ENCODE measurements at regions of chr3 and their contacts with region 1.

Region 1: DNA sequence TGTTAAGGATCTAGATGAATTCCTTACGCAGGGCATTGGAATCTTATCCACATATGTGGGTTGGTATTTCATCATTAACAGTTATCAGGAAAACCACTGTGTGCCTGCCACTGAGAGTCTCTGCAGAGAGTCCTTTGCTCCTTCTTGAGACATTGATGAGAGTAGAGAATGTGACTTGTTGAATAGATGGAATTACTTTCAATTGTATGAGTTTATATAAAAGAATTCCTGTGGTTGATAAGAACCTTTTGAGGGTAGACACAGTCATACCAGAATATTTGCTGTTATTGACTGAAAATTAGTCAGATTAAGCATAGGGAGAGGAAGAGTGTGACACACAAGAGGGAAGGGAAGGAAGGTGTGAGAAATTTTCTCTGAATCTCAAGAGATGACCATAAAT is 30.8 kb downstream of the ARHGEF26 start:
- DNase-seq: peak; percentile 51
- H3K4me3 ChIP-seq: no peak overlapping the region
- H3K27ac ChIP-seq: no peak overlapping the region
- H3K4me1 ChIP-seq: peaks cover 10% of the 10 kb centered on the region
- H3K27me3 ChIP-seq: no peaks in the 10 kb centered on the region
- CTCF ChIP-seq: no peak

Region 2: DNA sequence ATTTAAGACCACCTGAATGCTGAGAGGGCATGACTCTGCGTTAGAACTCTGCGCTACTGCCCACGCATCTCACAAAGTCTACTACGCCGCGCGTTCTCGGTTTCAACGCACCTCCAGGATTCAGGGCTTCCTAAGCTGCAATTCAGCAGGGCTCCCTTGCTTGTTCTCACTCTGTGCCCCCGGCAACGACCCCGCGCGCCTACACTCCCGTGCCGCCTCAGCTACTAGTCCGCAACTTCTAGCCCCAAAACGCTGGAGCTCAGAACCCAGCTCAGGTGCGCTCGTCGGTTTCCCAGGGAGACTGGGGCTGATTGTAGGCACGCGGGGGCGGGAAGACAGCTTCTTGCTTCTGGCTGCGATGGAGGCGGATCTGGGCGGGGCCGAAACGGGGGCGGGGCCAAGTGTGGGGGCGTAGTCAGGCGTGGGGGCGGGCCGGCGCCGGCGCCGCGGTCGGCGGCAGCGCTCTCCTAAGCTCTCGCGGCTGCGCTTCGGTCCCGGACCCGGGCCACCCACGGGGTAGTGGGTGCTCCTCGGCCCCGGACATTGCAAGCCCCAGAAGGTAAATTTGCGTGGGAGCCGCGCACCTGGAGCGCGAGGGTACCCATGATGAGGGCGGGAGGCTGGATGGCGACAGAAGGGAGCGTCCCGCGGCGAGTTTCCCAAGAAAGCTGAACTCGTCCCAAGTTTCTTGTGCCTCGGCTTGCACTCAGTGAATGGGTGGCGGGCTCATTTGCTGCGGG is 30.8 kb before region 1 on chr3 and contains the start of gene ARHGEF26:
- CTCF ChIA-PET with region 1: no interaction called
- dilution Hi-C with region 1: no loop called
- in situ Hi-C with region 1: no loop called
- intact Hi-C with region 1: loop called (anchors 2 kb)
- DNase-seq: peak; percentile 83
- H3K4me3 ChIP-seq: peak within 1 kb of the TSS; percentile 66 to 85 (median 77)
- H3K27ac ChIP-seq: peak within 1 kb of the TSS; percentile 46
- H3K4me1 ChIP-seq: peaks cover 26% of the 10 kb centered on the region
- H3K27me3 ChIP-seq: no peaks in the 10 kb centered on the region
- CTCF ChIP-seq: no peak
- total RNA-seq, gene ARHGEF26: 2.7 to 12.2 TPM

Region 3: GRCh38 chr3:154168998-154169795 is 17.2 kb after region 1 on chr3:
- CTCF ChIA-PET with region 1: interaction called, 11 read pairs
- dilution Hi-C with region 1: no loop called
- in situ Hi-C with region 1: no loop called
- intact Hi-C with region 1: no loop called
- DNase-seq: no peak
- H3K4me3 ChIP-seq: no peak overlapping the region
- H3K27ac ChIP-seq: no peak overlapping the region
- H3K4me1 ChIP-seq: no peaks in the 10 kb centered on the region
- H3K27me3 ChIP-seq: no peaks in the 10 kb centered on the region
- CTCF ChIP-seq: no peak

Region 4: GRCh38 chr3:154364849-154365248 is 212.9 kb after region 1 on chr3:
- CTCF ChIA-PET with region 1: no interaction called
- dilution Hi-C with region 1: no loop called
- in situ Hi-C with region 1: no loop called
- intact Hi-C with region 1: no loop called
- DNase-seq: no peak
- H3K4me3 ChIP-seq: no peak overlapping the region
- H3K27ac ChIP-seq: no peak overlapping the region
- H3K4me1 ChIP-seq: no peaks in the 10 kb centered on the region
- H3K27me3 ChIP-seq: no peaks in the 10 kb centered on the region
- CTCF ChIP-seq: no peak